GM10248 (cell line): ENCODE measurements at regions of chr3 and their contacts with region 1.

Region 1: DNA sequence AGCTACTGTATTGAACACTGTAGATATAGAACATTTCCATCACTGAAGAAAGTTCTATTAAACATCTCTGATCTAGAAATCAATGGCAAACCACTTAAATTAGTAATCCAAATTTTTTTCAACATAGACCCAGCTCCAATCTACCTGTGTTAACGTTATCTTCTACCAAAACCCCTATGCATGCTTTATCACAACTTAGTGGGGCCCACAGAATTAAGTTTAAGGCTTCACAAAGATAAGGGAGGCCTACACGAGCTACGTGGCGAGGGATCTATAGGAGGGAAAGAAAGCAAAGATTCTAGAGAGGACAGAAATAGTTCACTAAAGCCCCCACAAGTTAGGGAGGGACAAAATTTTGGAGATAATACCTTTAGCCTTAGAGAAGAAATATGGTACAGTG is 116.1 kb downstream of the TFDP2 start:
- DNase-seq: no peak
- CTCF ChIP-seq: no peak

Region 2: GRCh38 chr3:141845407-141846049 is 187.8 kb before region 1 on chr3:
- CTCF ChIA-PET with region 1: no interaction called
- POLR2A ChIA-PET with region 1: no interaction called
- DNase-seq: no peak
- CTCF ChIP-seq: no peak

Region 3: GRCh38 chr3:141928626-141929270 is 104.5 kb before region 1 on chr3:
- CTCF ChIA-PET with region 1: no interaction called
- POLR2A ChIA-PET with region 1: no interaction called
- DNase-seq: no peak
- CTCF ChIP-seq: no peak

Region 4: GRCh38 chr3:142022381-142022780 is 10.9 kb before region 1 on chr3:
- CTCF ChIA-PET with region 1: interaction called, 16 read pairs
- POLR2A ChIA-PET with region 1: no interaction called
- DNase-seq: peak; percentile 26
- CTCF ChIP-seq: peak; percentile 58

Region 5: GRCh38 chr3:142117056-142117851 is 84.0 kb after region 1 on chr3:
- CTCF ChIA-PET with region 1: no interaction called
- POLR2A ChIA-PET with region 1: no interaction called
- DNase-seq: no peak
- CTCF ChIP-seq: no peak

Region 6: GRCh38 chr3:142976621-142977398 is 943.5 kb after region 1 on chr3:
- CTCF ChIA-PET with region 1: no interaction called
- POLR2A ChIA-PET with region 1: no interaction called
- DNase-seq: no peak
- CTCF ChIP-seq: no peak